Stomach (tissue), 19 donors: ENCODE measurements at regions of chr12 and their contacts with region 1.

Region 1: DNA sequence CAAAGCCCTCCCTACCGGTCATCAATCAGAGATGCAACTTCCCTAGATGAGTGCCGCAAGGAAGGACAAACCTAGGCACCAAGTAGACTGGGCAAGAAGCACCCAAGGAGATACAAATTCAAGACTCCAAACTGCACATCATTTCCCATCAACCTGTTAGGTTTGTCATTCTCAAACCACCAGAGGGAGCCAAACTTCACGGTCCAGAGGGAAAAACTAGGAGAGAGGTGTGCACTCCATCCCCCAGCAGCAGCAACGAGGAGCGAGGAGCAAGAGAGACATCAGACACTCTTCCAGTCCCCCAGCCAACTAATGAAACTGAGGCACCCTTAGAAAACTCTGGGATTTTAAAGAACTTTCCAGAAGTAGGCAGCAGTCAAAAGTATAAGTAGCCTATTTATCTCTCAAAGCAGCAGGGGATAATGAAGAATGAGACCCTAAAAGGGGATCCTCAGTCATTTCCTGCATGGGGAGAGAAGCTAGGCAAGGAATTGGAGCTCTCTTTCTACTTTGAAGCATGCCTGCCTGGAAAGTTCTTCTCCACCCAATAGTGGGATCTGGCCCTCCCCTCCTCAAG is 37.0 kb upstream of the NT5DC3 start:
- DNase-seq: peak; percentile 57 to 84
- H3K4me3 ChIP-seq: no peak overlapping the region
- H3K27ac ChIP-seq: no peak overlapping the region
- H3K4me1 ChIP-seq: peaks cover 0 to 4% (median 0%) of the 10 kb centered on the region in 4 donors
- H3K27me3 ChIP-seq: no peaks in the 10 kb centered on the region
- CTCF ChIP-seq: peak in 5 of 7 experiments; percentile 44 to 63 (median 59)
- EP300 ChIP-seq: no peak
- POLR2A ChIP-seq: no peak

Region 2: GRCh38 chr12:103369929-103370328 is 508.1 kb before region 1 on chr12:
- intact Hi-C with region 1: no loop called
- DNase-seq: no peak
- H3K4me3 ChIP-seq: no peak overlapping the region
- H3K27ac ChIP-seq: no peak overlapping the region
- H3K4me1 ChIP-seq: peaks cover 0 to 6% (median 2%) of the 10 kb centered on the region in 4 donors
- H3K27me3 ChIP-seq: no peaks in the 10 kb centered on the region
- CTCF ChIP-seq: no peak
- EP300 ChIP-seq: no peak
- POLR2A ChIP-seq: no peak

Region 3: GRCh38 chr12:104108755-104109445 is 230.9 kb after region 1 on chr12:
- intact Hi-C with region 1: loop called (anchors 5 kb)
- DNase-seq: peak; percentile 83 to 93
- H3K4me3 ChIP-seq: no peak overlapping the region
- H3K27ac ChIP-seq: no peak overlapping the region
- H3K4me1 ChIP-seq: peaks cover 0 to 31% (median 14%) of the 10 kb centered on the region in 4 donors
- H3K27me3 ChIP-seq: no peaks in the 10 kb centered on the region
- CTCF ChIP-seq: peak in 5 of 7 experiments; percentile 58 to 88 (median 77)
- EP300 ChIP-seq: no peak
- POLR2A ChIP-seq: no peak